IMR-90 (cell line): ENCODE measurements at regions of chr20 and their contacts with region 1.

Region 1: DNA sequence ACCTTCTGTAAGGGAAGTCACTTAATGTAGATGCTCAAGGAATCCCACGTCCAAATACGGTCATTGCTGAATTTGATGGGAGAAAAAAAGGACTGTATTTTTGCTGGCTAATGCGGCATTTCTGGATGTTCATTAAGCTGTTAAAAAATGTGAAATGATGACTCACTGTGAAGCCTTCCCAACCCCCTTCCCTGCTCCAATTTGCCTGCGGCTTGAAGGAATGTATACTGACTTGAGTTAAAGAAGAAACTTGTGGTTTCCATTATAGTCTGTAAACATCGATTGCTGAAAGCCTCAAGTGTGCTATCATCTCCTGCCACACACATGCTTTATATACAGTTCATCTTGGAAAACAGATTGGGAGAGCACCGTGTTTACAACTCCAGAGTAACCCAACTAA is 249.1 kb upstream of the JAG1 start:
- DNase-seq: peak; percentile 96
- ATAC-seq: peak; percentile 70
- H3K4me3 ChIP-seq: no peak overlapping the region
- H3K27ac ChIP-seq: peak overlapping the region; percentile 93
- H3K4me1 ChIP-seq: peaks cover 34% of the 10 kb centered on the region
- H3K27me3 ChIP-seq: no peaks in the 10 kb centered on the region
- CTCF ChIP-seq: no peak
- POLR2A ChIP-seq: no peak
- RAD21 ChIP-seq: no peak

Region 2: DNA sequence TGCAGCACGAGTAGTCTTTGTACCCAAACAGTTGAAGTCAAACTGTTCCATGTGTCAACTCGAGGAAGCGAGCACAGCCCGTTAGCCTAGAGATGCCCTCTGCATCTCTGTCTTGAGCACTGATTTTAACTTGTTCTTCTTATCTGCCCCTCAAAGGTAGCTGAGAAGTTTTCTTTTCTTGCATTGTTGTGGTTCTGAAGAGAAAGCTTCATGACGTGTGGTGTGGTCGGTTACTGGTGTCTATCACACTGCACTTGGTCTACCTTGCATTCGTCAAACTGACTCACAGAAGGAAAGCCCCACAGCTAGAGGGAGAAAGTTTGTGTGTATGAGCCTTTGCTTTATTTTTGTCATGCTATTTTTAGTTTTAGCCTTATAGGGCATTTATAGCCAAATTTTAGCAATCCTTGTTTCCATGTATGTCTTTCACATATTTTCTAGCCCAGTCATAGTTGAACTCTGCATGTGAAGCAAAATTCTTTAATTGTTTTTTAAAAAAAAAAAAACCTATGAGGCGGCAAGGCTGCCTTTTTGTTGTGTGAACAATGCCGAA is 364.2 kb before region 1 on chr20:
- CTCF ChIA-PET with region 1: no interaction called
- POLR2A ChIA-PET with region 1: no interaction called
- dilution Hi-C with region 1: no loop called
- in situ Hi-C with region 1: no loop called
- intact Hi-C with region 1: loop called (anchors 5 kb)
- DNase-seq: peak; percentile 99
- ATAC-seq: peak; percentile 89
- H3K4me3 ChIP-seq: peak overlapping the region; percentile 1; the same call in 1 of the 2 replicates
- H3K27ac ChIP-seq: peak overlapping the region; percentile 88
- H3K4me1 ChIP-seq: peaks cover 15% of the 10 kb centered on the region
- H3K27me3 ChIP-seq: no peaks in the 10 kb centered on the region
- CTCF ChIP-seq: peak; percentile 28; the same call in 1 of the 2 replicates
- POLR2A ChIP-seq: 0 out of 2 replicates have a peak, but pooled peaks have one; percentile 21
- RAD21 ChIP-seq: no peak; the same call in none of the 2 replicates

Region 3: DNA sequence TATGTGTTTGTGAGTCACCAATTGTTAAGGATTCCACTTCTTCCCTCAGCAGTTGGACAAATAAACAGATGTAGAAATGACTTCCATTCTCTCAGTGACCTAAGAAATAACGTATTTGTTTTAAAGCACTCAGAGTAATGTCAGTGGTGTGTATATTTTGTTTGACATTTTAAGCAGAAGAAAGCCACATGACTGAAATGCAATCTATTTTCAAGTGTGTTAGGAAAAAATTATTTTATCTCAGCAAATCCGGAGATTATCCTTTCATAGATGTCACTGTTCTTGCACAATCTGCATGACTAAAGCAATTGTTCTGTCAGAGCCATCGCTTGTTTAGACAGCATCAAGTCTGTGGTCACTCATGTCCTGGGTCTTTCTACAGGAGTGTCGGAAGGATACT is 326.2 kb before region 1 on chr20:
- CTCF ChIA-PET with region 1: no interaction called
- POLR2A ChIA-PET with region 1: no interaction called
- dilution Hi-C with region 1: no loop called
- in situ Hi-C with region 1: no loop called
- intact Hi-C with region 1: loop called (anchors 5 kb)
- DNase-seq: peak; percentile 95
- ATAC-seq: peak; percentile 72
- H3K4me3 ChIP-seq: no peak overlapping the region
- H3K27ac ChIP-seq: no peak overlapping the region
- H3K4me1 ChIP-seq: peaks cover 18% of the 10 kb centered on the region
- H3K27me3 ChIP-seq: no peaks in the 10 kb centered on the region
- CTCF ChIP-seq: no peak
- POLR2A ChIP-seq: no peak
- RAD21 ChIP-seq: no peak

Region 4: GRCh38 chr20:10710991-10711775 is 211.8 kb before region 1 on chr20:
- CTCF ChIA-PET with region 1: no interaction called
- POLR2A ChIA-PET with region 1: no interaction called
- dilution Hi-C with region 1: no loop called
- in situ Hi-C with region 1: no loop called
- intact Hi-C with region 1: loop called (anchors 5 kb)
- DNase-seq: peak; percentile 32
- ATAC-seq: peak; percentile 15
- H3K4me3 ChIP-seq: no peak overlapping the region
- H3K27ac ChIP-seq: no peak overlapping the region
- H3K4me1 ChIP-seq: peaks cover 10% of the 10 kb centered on the region
- H3K27me3 ChIP-seq: no peaks in the 10 kb centered on the region
- CTCF ChIP-seq: no peak
- POLR2A ChIP-seq: no peak
- RAD21 ChIP-seq: no peak

Region 5: DNA sequence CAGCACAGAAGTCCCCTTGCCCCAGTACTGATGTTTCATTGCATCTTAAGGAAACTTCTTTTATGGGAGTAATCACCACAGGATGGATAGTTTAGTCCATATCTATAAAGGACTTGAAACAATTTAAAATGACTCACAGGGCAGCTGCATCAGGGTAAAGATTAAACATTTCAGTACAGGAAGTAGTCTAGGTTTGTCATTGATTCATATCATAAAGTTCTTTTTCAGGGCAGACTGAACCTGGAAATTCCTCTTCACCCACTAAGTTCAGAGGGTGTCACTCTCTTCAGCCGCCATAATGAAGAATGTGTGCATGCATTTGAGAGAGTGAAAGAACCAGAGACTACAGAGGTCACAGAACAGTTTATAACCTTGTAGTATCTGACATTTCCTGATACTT is 47.2 kb after region 1 on chr20:
- CTCF ChIA-PET with region 1: no interaction called
- POLR2A ChIA-PET with region 1: no interaction called
- dilution Hi-C with region 1: no loop called
- in situ Hi-C with region 1: no loop called
- intact Hi-C with region 1: no loop called
- DNase-seq: peak; percentile 67
- ATAC-seq: peak; percentile 60
- H3K4me3 ChIP-seq: no peak overlapping the region
- H3K27ac ChIP-seq: no peak overlapping the region
- H3K4me1 ChIP-seq: no peaks in the 10 kb centered on the region
- H3K27me3 ChIP-seq: no peaks in the 10 kb centered on the region
- CTCF ChIP-seq: no peak
- POLR2A ChIP-seq: no peak
- RAD21 ChIP-seq: no peak

Region 6: DNA sequence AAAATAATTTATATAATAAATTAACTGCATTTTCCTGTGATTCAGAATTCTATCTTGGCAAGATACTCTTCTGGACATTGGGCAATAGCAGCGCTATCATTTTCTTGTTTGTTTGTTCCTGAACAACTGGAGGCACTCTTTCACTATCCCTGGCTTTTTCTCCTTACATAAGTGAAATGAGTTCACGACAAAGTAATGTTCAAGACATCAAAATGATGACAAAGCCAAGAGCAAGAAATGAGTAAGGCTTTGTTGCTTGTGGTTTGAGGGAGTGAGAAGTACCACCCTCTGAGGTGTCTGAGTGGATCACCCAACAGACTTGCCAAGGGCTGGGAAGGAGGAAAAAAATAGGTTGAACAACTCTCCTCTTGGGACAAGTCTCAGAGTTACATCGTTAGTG is 217.4 kb after region 1 on chr20:
- CTCF ChIA-PET with region 1: no interaction called
- POLR2A ChIA-PET with region 1: no interaction called
- dilution Hi-C with region 1: no loop called
- in situ Hi-C with region 1: no loop called
- intact Hi-C with region 1: loop called (anchors 5 kb)
- DNase-seq: peak; percentile 84
- ATAC-seq: no peak; the same call in 1 of the 2 replicates
- H3K4me3 ChIP-seq: no peak overlapping the region
- H3K27ac ChIP-seq: no peak overlapping the region
- H3K4me1 ChIP-seq: 0 out of 2 replicates have a peak, but pooled peaks cover 2% of the 10 kb centered on the region
- H3K27me3 ChIP-seq: no peaks in the 10 kb centered on the region; the same call in 1 of the 2 replicates
- CTCF ChIP-seq: peak; percentile 12; the same call in 1 of the 2 replicates
- POLR2A ChIP-seq: no peak
- RAD21 ChIP-seq: no peak

Region 7: GRCh38 chr20:11204926-11205768 is 282.2 kb after region 1 on chr20:
- CTCF ChIA-PET with region 1: interaction called, 8 read pairs
- POLR2A ChIA-PET with region 1: no interaction called
- dilution Hi-C with region 1: no loop called
- in situ Hi-C with region 1: no loop called
- intact Hi-C with region 1: loop called (anchors 10 kb)
- DNase-seq: peak; percentile 71
- ATAC-seq: peak; percentile 90
- H3K4me3 ChIP-seq: no peak overlapping the region
- H3K27ac ChIP-seq: no peak overlapping the region
- H3K4me1 ChIP-seq: no peaks in the 10 kb centered on the region; the same call in none of the 2 replicates
- H3K27me3 ChIP-seq: no peaks in the 10 kb centered on the region
- CTCF ChIP-seq: peak; percentile 72
- POLR2A ChIP-seq: no peak
- RAD21 ChIP-seq: peak; percentile 77

Region 8: GRCh38 chr20:11274141-11274594 is 351.2 kb after region 1 on chr20:
- CTCF ChIA-PET with region 1: no interaction called
- POLR2A ChIA-PET with region 1: no interaction called
- dilution Hi-C with region 1: no loop called
- in situ Hi-C with region 1: no loop called
- intact Hi-C with region 1: loop called (anchors 2 kb)
- DNase-seq: peak; percentile 79
- ATAC-seq: peak; percentile 94
- H3K4me3 ChIP-seq: no peak overlapping the region
- H3K27ac ChIP-seq: no peak overlapping the region
- H3K4me1 ChIP-seq: no peaks in the 10 kb centered on the region
- H3K27me3 ChIP-seq: no peaks in the 10 kb centered on the region
- CTCF ChIP-seq: peak; percentile 78
- POLR2A ChIP-seq: no peak
- RAD21 ChIP-seq: peak; percentile 90

Region 9: DNA sequence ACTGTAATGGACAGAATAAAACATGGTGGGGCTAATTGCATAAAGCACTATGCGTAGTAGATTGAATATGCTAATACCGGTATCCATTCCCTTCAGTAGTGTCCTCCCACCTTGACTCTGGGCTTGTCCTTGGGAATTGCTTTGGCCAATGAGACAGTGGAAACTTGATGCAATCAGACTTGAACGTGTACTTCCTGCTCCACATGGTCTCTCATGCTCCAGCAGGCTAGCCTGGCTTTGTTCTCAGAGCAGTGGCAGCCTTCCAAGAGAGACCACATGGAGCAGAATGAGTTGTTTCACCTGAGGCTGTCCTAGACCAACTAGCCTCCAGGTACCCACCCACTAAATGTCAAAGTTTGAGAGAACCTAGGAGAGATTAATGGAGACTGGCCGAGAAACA is 957.7 kb after region 1 on chr20:
- CTCF ChIA-PET with region 1: no interaction called
- POLR2A ChIA-PET with region 1: no interaction called
- dilution Hi-C with region 1: no loop called
- in situ Hi-C with region 1: no loop called
- intact Hi-C with region 1: no loop called
- DNase-seq: no peak
- ATAC-seq: no peak
- H3K4me3 ChIP-seq: no peak overlapping the region
- H3K27ac ChIP-seq: no peak overlapping the region
- H3K4me1 ChIP-seq: no peaks in the 10 kb centered on the region
- H3K27me3 ChIP-seq: no peaks in the 10 kb centered on the region
- CTCF ChIP-seq: no peak
- POLR2A ChIP-seq: no peak
- RAD21 ChIP-seq: no peak